ENCODE measurements at regions of chr10 and their contacts with region 1.

Region 1: DNA sequence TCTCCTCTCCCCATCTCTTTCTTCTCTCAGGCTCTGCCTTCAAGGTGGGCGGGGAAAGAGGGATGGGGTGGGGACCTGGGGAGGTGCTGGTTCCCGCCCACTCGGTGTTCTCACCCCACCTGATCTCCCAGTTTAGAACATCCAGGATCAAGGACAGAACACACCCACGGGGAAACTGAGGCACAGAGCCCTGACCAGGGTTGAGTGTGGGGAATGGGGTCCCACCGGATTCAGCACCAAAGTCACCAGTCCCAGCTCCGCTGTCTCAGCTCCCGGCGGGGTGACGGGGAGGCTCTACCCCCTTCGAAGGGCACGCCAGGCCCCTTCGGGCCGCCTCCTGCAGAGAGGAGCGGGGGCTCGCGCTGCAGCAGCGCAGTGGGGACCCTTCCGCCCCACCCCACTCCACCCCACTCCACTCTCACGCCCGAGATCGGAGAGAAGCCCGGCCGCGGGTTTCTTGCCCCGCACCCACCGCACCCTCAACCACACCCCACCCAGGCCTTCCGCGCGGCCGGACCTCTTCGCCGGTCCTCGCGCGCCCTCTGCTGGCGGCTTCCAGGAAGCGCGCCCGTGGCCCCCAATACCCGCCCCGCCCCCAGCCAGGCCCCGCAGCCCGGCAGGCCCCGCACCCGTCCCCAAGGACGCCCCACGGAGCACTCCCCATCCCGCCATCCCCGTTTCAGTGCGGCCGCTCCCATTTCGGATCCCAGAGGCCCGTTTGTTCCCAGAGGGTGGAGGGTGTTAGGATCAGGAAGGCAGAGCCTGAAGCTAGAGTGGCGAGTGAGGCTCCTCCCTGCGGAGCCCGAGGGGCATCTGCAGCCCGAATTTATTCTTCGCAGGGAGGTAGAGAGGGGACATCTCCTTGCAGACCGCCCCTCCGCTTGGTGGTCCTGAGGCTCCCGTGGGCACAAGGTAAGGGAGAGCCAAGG is 18.0 kb downstream of the POLL start:
- DNase-seq: peak; percentile 67 to 79 (median 77)
- H3K4me3 ChIP-seq: peak overlapping the region; percentile 27 to 82 (median 66)
- H3K27ac ChIP-seq: no peak overlapping the region
- H3K4me1 ChIP-seq: peaks cover 0 to 25% (median 22%) of the 10 kb centered on the region in 4 experiments
- H3K27me3 ChIP-seq: peaks cover 4 to 57% (median 28%) of the 10 kb centered on the region in 5 experiments

Region 2: DNA sequence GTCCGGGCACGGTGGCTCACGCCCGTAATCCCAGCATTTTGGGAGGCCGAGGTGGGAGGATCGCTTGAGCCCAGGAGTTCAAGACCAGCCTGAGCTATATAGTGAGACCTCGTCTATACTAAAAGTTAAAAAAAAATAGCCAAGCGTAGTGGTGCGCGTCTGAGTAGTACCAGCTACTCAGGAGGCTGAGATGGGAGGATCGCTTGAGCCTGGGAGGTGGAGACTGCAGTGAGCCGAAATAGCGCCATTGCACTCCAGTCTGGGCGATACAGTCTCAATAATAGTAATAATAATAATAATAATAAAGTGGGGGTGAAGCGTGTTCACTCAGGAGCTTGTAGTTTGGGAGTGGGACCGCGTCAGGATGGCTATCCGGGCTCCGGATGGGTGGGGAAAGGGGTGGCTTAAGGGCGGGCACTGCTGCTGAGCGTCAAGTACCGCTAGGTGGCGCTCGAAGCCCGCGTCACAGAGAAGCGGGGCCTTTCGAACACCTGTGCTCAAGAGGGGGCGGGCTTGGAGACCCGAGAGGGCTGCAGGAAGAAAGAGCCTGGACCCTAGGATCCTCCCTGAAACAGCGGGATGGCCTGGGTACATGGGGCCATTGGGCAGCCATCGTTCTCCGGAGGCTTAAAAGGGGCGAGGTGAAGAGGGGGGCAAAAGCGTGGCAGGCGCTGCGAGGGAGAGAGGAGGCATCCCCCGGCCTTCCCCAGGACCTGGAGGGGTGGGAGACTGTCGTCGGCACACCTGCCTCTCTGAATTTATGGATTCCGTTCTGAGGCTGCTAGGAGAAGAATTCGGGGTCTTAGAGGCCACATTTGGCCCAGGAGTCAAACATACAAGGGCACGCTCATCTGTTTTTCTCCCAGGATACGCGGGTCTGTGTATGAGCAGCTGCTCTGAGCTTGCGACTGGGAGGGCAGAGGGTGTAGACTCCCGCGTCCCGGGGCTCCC is 355.4 kb before region 1 on chr10:
- CTCF ChIA-PET with region 1: interaction called, 20 read pairs
- POLR2A ChIA-PET with region 1: no interaction called
- DNase-seq: peak; percentile 57 to 67 (median 59)
- H3K4me3 ChIP-seq: no peak overlapping the region
- H3K27ac ChIP-seq: no peak overlapping the region
- H3K4me1 ChIP-seq: peaks cover 0 to 30% (median 15%) of the 10 kb centered on the region in 4 experiments
- H3K27me3 ChIP-seq: peaks cover 11 to 99% (median 64%) of the 10 kb centered on the region in 5 experiments

Region 3: GRCh38 chr10:101297901-101298486 is 272.1 kb before region 1 on chr10:
- CTCF ChIA-PET with region 1: interaction called, 10 read pairs
- POLR2A ChIA-PET with region 1: no interaction called
- DNase-seq: peak; percentile 63 to 73 (median 68)
- H3K4me3 ChIP-seq: no peak overlapping the region
- H3K27ac ChIP-seq: no peak overlapping the region
- H3K4me1 ChIP-seq: no peaks in the 10 kb centered on the region
- H3K27me3 ChIP-seq: peaks cover 8 to 78% (median 24%) of the 10 kb centered on the region in 5 experiments

Region 4: GRCh38 chr10:101495324-101495925 is 74.7 kb before region 1 on chr10:
- CTCF ChIA-PET with region 1: interaction called, 28 read pairs
- POLR2A ChIA-PET with region 1: interaction called, 3 read pairs
- DNase-seq: peak; percentile 33 to 64 (median 61)
- H3K4me3 ChIP-seq: no peak overlapping the region
- H3K27ac ChIP-seq: no peak overlapping the region
- H3K4me1 ChIP-seq: no peaks in the 10 kb centered on the region
- H3K27me3 ChIP-seq: no peaks in the 10 kb centered on the region

Region 5: GRCh38 chr10:101848894-101849351 is 278.8 kb after region 1 on chr10:
- CTCF ChIA-PET with region 1: no interaction called
- POLR2A ChIA-PET with region 1: no interaction called
- DNase-seq: peak in 2 of 3 donors; percentile 31
- H3K4me3 ChIP-seq: no peak overlapping the region
- H3K27ac ChIP-seq: no peak overlapping the region
- H3K4me1 ChIP-seq: peaks cover 7 to 27% (median 15%) of the 10 kb centered on the region in 4 experiments
- H3K27me3 ChIP-seq: no peaks in the 10 kb centered on the region